Panc1 (cell line): ENCODE measurements at regions of chr9 and their contacts with region 1.

Region 1: DNA sequence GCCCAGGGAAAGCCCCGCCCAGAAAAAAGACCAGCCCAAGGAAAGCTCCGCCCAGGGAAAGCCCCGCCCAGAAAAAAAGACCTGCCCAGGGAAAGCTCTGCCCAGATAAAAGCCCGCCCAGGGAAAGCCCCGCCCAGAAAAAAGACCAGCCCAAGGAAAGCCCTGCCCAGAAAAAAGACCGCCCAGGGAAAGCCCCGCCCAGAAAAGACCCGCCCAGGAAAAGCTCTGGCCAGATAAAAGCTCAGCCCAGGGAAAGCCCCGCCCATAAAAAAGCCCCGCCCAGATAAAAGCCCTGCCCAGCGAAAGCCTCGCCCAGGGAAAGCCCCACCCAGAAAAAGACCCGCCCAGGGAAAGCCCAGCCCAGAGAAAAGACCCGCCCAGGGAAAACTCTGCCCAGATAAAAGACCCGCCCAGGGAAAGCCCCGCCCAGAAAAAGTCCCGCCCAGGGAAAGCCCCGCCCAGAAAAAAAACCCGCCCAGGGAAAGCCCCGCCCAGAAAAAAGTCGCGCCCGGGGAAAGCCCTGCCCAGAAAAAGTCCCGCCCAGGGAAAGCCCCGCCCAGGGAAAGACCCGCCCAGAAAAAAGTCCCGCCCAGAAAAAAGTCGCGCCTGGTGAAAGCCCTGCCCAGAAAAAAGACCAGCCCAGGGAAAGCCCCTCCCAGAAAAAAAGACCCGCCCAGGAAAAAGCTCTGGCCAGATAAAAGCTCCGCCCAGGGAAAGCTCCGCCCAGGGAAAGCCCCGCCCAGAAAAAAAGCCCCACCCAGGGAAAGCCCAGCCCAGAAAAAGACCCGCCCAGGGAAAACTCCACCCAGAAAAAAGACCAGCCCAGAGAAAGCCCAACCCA is 11.9 kb downstream of the GRIN1 start:
- DNase-seq: no peak
- ATAC-seq: peak; percentile 47; the same call in 1 of the 2 replicates
- H3K4me3 ChIP-seq: no peak overlapping the region
- H3K27ac ChIP-seq: no peak overlapping the region
- H3K4me1 ChIP-seq: no peaks in the 10 kb centered on the region
- H3K27me3 ChIP-seq: no peaks in the 10 kb centered on the region
- CTCF ChIP-seq: no peak

Region 2: GRCh38 chr9:137136261-137136880 is 14.5 kb before region 1 on chr9:
- CTCF ChIA-PET with region 1: interaction called, 15 read pairs
- POLR2A ChIA-PET with region 1: interaction called, 6 read pairs
- in situ Hi-C with region 1: no loop called
- intact Hi-C with region 1: no loop called
- DNase-seq: no peak
- ATAC-seq: no peak
- H3K4me3 ChIP-seq: no peak overlapping the region
- H3K27ac ChIP-seq: no peak overlapping the region
- H3K4me1 ChIP-seq: no peaks in the 10 kb centered on the region
- H3K27me3 ChIP-seq: no peaks in the 10 kb centered on the region
- CTCF ChIP-seq: no peak

Region 3: DNA sequence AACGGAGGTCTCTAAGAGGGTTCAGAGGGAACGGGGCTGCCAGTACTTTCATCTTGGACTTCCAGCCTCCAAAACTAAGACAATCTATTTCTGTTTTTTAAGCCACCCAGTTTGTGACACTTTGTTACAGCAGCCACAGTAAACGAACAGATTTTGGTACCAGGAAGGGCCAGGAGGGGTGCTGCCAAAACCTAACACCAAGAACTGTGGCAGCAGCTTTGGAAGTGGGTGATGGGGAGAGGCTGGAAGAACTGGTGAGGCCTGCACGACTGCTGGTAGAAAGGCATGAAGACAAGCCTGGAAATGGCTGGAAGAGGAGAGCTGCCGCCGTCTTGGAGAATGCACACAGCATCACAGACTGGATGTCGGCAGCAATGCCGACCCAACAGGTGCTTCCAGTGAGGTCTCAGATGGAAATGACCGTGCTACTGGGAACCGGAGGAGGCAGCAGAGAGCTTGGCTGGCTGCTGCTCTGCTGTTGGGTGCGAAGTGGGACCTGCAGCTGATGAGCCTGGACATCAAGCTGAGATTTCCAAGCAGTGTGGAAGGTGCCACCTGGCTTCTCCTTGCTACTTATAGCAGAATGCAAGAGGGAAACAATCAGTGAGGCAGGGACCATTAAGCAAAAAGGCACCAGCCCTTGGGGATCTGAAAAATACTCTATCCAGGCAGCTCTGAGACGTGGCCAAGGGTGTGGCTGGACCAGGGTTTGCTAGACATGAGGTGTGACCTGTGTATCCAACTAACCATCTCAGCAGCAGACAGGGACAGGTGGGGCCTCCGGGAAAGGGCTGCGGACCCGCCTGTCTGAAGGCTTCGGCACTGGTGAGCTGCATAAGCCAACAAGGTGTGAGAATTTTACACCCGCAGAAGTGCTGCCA is 25.7 kb after region 1 on chr9:
- CTCF ChIA-PET with region 1: no interaction called
- POLR2A ChIA-PET with region 1: interaction called, 21 read pairs
- in situ Hi-C with region 1: no loop called
- intact Hi-C with region 1: no loop called
- DNase-seq: no peak
- ATAC-seq: peak; percentile 70
- H3K4me3 ChIP-seq: no peak overlapping the region
- H3K27ac ChIP-seq: no peak overlapping the region
- H3K4me1 ChIP-seq: no peaks in the 10 kb centered on the region
- H3K27me3 ChIP-seq: no peaks in the 10 kb centered on the region
- CTCF ChIP-seq: peak; percentile 78; the same call in 1 of the 2 replicates